ENCODE measurements at regions of chr3 and their contacts with region 1.

Region 1: GRCh38 chr3:81490541-81491288 is 270.7 kb downstream of the GBE1 start:
- DNase-seq: peak; percentile 54
- H3K4me3 Mint-ChIP-seq: no peak overlapping the region
- H3K27ac Mint-ChIP-seq: no peak overlapping the region
- H3K4me1 Mint-ChIP-seq: no peaks in the 10 kb centered on the region
- H3K27me3 Mint-ChIP-seq: no peaks in the 10 kb centered on the region

Region 2: GRCh38 chr3:81363816-81364215 is 126.9 kb before region 1 on chr3:
- intact Hi-C with region 1: no loop called
- DNase-seq: no peak
- H3K4me3 Mint-ChIP-seq: no peak overlapping the region
- H3K27ac Mint-ChIP-seq: no peak overlapping the region
- H3K4me1 Mint-ChIP-seq: no peaks in the 10 kb centered on the region
- H3K27me3 Mint-ChIP-seq: no peaks in the 10 kb centered on the region

Region 3: GRCh38 chr3:81643721-81644120 is 153.0 kb after region 1 on chr3:
- intact Hi-C with region 1: loop called (anchors 5 kb)
- DNase-seq: no peak
- H3K4me3 Mint-ChIP-seq: no peak overlapping the region
- H3K27ac Mint-ChIP-seq: no peak overlapping the region
- H3K4me1 Mint-ChIP-seq: no peaks in the 10 kb centered on the region
- H3K27me3 Mint-ChIP-seq: no peaks in the 10 kb centered on the region

Region 4: GRCh38 chr3:81910244-81910852 is 419.6 kb after region 1 on chr3:
- intact Hi-C with region 1: loop called (anchors 2 kb)
- DNase-seq: no peak
- H3K4me3 Mint-ChIP-seq: no peak overlapping the region
- H3K27ac Mint-ChIP-seq: no peak overlapping the region
- H3K4me1 Mint-ChIP-seq: no peaks in the 10 kb centered on the region
- H3K27me3 Mint-ChIP-seq: peaks cover 2% of the 10 kb centered on the region

Region 5: GRCh38 chr3:82133070-82133606 is 642.4 kb after region 1 on chr3:
- intact Hi-C with region 1: loop called (anchors 1 kb)
- DNase-seq: no peak
- H3K4me3 Mint-ChIP-seq: no peak overlapping the region
- H3K27ac Mint-ChIP-seq: no peak overlapping the region
- H3K4me1 Mint-ChIP-seq: no peaks in the 10 kb centered on the region
- H3K27me3 Mint-ChIP-seq: peaks cover 3% of the 10 kb centered on the region

Measured in activated T-helper 1 cell treated with anti-CD3 and anti-CD28 coated beads, Interleukin-12 subunit alpha, Interleukin-12 subunit beta, Interleukin-2, Interleukin-4 antibody, amounts not matched to agents 30 ng/mL and 10 ng/mL and 1 ng/mL, durations not matched to agents 14 hours and 24 hours and 36 hours (primary cell).